HepG2 (cell line): ENCODE measurements at regions of chr7 and their contacts with region 1.

Region 1: GRCh38 chr7:6008668-6009611 is at the starts of genes AIMP2 and PMS2:
- DNase-seq: peak; percentile 99
- ATAC-seq: peak; percentile 94
- H3K4me3 ChIP-seq: peak within 1 kb of the TSS; percentile 73 to 88 (median 75)
- H3K27ac ChIP-seq: peak within 1 kb of the TSS; percentile 89
- H3K4me1 ChIP-seq: peaks cover 41% of the 10 kb centered on the region
- H3K27me3 ChIP-seq: no peaks in the 10 kb centered on the region; a peak in 1 of 5 replicates
- CTCF ChIP-seq: peak; percentile 54
- EP300 ChIP-seq: no peak
- POLR2A ChIP-seq: peak; percentile 96
- RAD21 ChIP-seq: peak; percentile 77
- total RNA-seq, gene AIMP2: 84.9 and 97.2 TPM in 2 replicates
- total RNA-seq, gene PMS2: 11.4 and 13.9 TPM in 2 replicates

Region 2: GRCh38 chr7:6020371-6021286 is 11.7 kb after region 1 on chr7:
- CTCF ChIA-PET with region 1: no interaction called
- POLR2A ChIA-PET with region 1: interaction called, 11 read pairs
- in situ Hi-C with region 1: no loop called
- intact Hi-C with region 1: no loop called
- DNase-seq: no peak
- ATAC-seq: no peak
- H3K4me3 ChIP-seq: no peak overlapping the region
- H3K27ac ChIP-seq: no peak overlapping the region
- H3K4me1 ChIP-seq: peaks cover 6% of the 10 kb centered on the region; the same call in 1 of the 2 replicates
- H3K27me3 ChIP-seq: no peaks in the 10 kb centered on the region
- CTCF ChIP-seq: no peak
- EP300 ChIP-seq: no peak
- POLR2A ChIP-seq: no peak
- RAD21 ChIP-seq: no peak

Region 3: GRCh38 chr7:6057316-6058129 is 48.6 kb after region 1 on chr7:
- CTCF ChIA-PET with region 1: no interaction called
- POLR2A ChIA-PET with region 1: interaction called, 10 read pairs
- in situ Hi-C with region 1: no loop called
- intact Hi-C with region 1: no loop called
- DNase-seq: peak; percentile 57
- ATAC-seq: no peak
- H3K4me3 ChIP-seq: peak overlapping the region; percentile 68 to 88 (median 78)
- H3K27ac ChIP-seq: peak overlapping the region; percentile 96
- H3K4me1 ChIP-seq: peaks cover 36% of the 10 kb centered on the region
- H3K27me3 ChIP-seq: no peaks in the 10 kb centered on the region; a peak in 1 of 5 replicates
- CTCF ChIP-seq: no peak
- EP300 ChIP-seq: no peak
- POLR2A ChIP-seq: peak in 1 of 2 experiments; percentile 4; a peak in 1 of 4 replicates
- RAD21 ChIP-seq: no peak

Region 4: DNA sequence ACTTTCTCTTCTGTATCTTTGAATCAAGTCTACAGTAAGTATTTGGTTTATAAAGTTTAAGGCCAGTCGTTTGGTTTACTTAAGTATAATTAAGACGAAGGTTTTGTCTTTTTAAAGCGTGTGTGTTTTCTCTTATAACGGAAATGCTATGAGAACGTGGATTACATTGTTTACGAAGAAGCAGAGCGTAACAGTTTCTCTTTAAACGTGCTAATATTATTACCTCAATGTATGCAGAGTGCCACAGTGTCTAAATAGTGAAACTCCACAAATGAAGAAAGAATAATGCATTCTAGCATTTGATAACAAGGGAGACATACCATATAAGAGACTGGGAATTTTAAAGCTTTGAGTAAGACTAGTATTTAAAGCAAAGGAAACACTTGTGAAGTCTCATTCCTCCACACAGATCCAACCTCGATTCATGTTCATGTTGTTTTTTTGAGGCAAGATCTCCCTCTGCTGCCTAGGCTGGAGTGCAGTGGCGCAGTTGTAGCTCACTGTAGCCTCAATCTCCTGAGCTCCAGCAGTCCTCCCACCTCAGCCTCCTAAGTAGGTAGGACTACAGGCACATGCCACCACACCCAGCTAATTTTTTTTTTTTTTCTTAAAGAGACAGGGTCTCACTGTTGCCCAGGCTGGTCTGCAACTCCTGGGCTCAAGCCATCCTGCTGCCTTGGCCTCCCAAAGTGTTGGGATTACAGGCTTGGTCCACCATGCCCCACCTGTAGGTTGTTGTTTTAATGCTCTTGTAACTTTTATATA is 97.4 kb after region 1 on chr7:
- CTCF ChIA-PET with region 1: no interaction called
- POLR2A ChIA-PET with region 1: interaction called, 21 read pairs
- in situ Hi-C with region 1: no loop called
- intact Hi-C with region 1: no loop called
- DNase-seq: peak; percentile 64
- ATAC-seq: peak; percentile 32
- H3K4me3 ChIP-seq: peak overlapping the region; percentile 98 to 100 (median 99)
- H3K27ac ChIP-seq: peak overlapping the region; percentile 82
- H3K4me1 ChIP-seq: peaks cover 39% of the 10 kb centered on the region
- H3K27me3 ChIP-seq: peaks cover 0 to 3% of the 10 kb centered on the region in 2 experiments; a peak in 1 of 5 replicates
- CTCF ChIP-seq: peak; percentile 89
- EP300 ChIP-seq: no peak
- POLR2A ChIP-seq: no peak
- RAD21 ChIP-seq: peak; percentile 64; the same call in 1 of the 2 replicates

Region 5: GRCh38 chr7:6133249-6133648 is 124.3 kb after region 1 on chr7:
- CTCF ChIA-PET with region 1: no interaction called
- POLR2A ChIA-PET with region 1: interaction called, 16 read pairs
- in situ Hi-C with region 1: no loop called
- intact Hi-C with region 1: no loop called
- DNase-seq: no peak
- ATAC-seq: no peak
- H3K4me3 ChIP-seq: no peak overlapping the region
- H3K27ac ChIP-seq: no peak overlapping the region
- H3K4me1 ChIP-seq: no peaks in the 10 kb centered on the region
- H3K27me3 ChIP-seq: no peaks in the 10 kb centered on the region
- CTCF ChIP-seq: no peak
- EP300 ChIP-seq: no peak
- POLR2A ChIP-seq: no peak
- RAD21 ChIP-seq: no peak

Region 6: GRCh38 chr7:6323967-6324701 is 315.2 kb after region 1 on chr7:
- CTCF ChIA-PET with region 1: no interaction called
- POLR2A ChIA-PET with region 1: no interaction called
- in situ Hi-C with region 1: loop called (anchors 10 kb)
- intact Hi-C with region 1: no loop called
- DNase-seq: no peak
- ATAC-seq: no peak
- H3K4me3 ChIP-seq: no peak overlapping the region
- H3K27ac ChIP-seq: no peak overlapping the region
- H3K4me1 ChIP-seq: no peaks in the 10 kb centered on the region
- H3K27me3 ChIP-seq: no peaks in the 10 kb centered on the region
- CTCF ChIP-seq: no peak
- EP300 ChIP-seq: no peak
- POLR2A ChIP-seq: no peak
- RAD21 ChIP-seq: no peak